ENCODE measurements at regions of chr7 and their contacts with region 1.

Region 1: GRCh38 chr7:150986099-150986512 is 4.7 kb upstream of the NOS3 start:
- DNase-seq: no peak
- H3K4me3 ChIP-seq: no peak overlapping the region
- H3K27ac ChIP-seq: no peak overlapping the region
- H3K4me1 ChIP-seq: no peaks in the 10 kb centered on the region
- H3K27me3 ChIP-seq: no peaks in the 10 kb centered on the region
- CTCF ChIP-seq: peak in 3 of 4 experiments; percentile 36 to 60 (median 55)
- POLR2A ChIP-seq: no peak

Region 2: GRCh38 chr7:150778738-150779301 is 207.3 kb before region 1 on chr7:
- intact Hi-C with region 1: loop called (anchors 2 kb)
- DNase-seq: peak; percentile 67
- H3K4me3 ChIP-seq: no peak overlapping the region
- H3K27ac ChIP-seq: no peak overlapping the region
- H3K4me1 ChIP-seq: no peaks in the 10 kb centered on the region
- H3K27me3 ChIP-seq: no peaks in the 10 kb centered on the region
- CTCF ChIP-seq: peak; percentile 52 to 85 (median 78)
- POLR2A ChIP-seq: no peak

Region 3: DNA sequence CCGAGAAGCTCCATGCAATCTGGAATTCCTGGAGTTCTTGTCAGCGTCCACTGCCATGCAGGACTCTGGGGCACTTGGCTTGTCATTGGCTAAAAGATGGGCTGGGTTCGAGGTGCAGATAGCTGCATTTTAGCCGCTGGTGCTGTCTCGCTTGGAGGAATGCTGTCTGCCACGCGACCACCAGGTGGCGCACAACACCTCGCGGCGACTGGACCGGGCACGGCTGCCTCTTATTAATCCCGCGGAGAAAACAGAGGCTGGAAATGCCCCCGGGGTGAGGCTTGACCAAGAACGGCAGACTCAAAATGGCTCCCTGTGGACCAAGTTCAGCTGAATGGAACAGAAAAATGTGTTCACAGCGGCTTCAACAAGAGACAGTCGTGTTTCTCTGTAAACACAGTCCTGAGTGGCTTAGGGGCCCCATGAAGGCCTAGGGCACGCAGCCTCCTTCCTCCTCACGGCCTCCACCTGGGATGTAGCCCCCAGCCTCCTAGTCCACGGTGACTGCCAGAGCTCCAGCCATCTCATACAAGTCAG is 87.6 kb before region 1 on chr7:
- intact Hi-C with region 1: loop called (anchors 1 kb)
- DNase-seq: peak; percentile 69
- H3K4me3 ChIP-seq: no peak overlapping the region
- H3K27ac ChIP-seq: no peak overlapping the region
- H3K4me1 ChIP-seq: no peaks in the 10 kb centered on the region
- H3K27me3 ChIP-seq: no peaks in the 10 kb centered on the region
- CTCF ChIP-seq: peak; percentile 90 to 95 (median 94)
- POLR2A ChIP-seq: no peak

Region 4: GRCh38 chr7:150962553-150963399 is 23.3 kb before region 1 on chr7:
- intact Hi-C with region 1: loop called (anchors 2 kb)
- DNase-seq: no peak
- H3K4me3 ChIP-seq: no peak overlapping the region
- H3K27ac ChIP-seq: peak overlapping the region; percentile 57 to 60
- H3K4me1 ChIP-seq: no peaks in the 10 kb centered on the region
- H3K27me3 ChIP-seq: no peaks in the 10 kb centered on the region
- CTCF ChIP-seq: peak; percentile 38 to 87 (median 69)
- POLR2A ChIP-seq: no peak

Region 5: DNA sequence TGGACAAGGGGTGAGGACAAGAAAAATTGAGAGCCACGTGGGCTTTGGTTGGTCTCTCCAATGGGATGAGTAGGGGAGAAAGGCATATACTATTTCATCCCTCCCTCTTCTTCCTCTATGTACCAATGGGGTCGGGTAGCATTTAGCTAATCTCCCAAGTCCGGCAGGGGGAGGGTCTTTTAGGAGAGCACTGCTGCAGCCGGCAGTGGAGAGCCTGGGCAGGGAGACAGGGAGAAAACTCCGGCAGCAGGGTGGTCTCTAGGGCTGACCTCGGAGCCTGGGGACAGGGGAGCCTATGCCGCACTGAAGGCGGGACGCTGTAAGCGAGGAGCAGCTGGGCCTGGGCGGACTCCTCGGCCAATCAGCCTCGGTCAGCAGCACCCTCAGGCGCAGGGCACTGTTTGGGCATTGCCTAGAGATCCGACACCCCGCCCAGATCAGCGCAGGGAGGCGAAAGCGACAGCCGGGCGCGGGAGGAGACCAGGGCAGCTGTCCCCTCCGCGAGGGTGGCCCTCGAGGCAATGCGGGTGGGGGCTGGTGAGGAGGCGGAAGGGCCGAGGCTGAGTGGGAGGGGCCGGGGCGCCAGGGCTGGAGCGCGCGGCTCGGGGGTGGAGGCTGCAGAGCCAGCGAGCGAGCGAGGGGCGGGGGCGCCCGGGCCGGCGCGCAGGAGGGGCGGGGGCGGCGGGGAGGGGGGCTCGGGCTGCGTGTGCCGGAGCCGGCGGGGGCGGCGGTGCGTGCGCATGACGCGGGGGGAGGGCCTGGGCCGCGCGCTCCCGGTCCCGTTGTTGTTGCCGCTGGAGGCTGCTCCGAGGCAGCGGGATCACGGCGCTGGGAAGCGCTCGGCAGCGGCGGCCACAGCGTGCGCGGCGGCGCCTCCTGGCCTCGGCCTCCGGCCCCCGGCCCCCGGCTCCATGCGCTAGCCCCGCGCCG is 99.8 kb after region 1 on chr7 and contains the start of gene AGAP3:
- intact Hi-C with region 1: no loop called
- DNase-seq: peak; percentile 87
- H3K4me3 ChIP-seq: peak within 1 kb of the TSS; percentile 61 to 80
- H3K27ac ChIP-seq: peak within 1 kb of the TSS; percentile 83 to 90
- H3K4me1 ChIP-seq: peaks cover 35% of the 10 kb centered on the region
- H3K27me3 ChIP-seq: no peaks in the 10 kb centered on the region
- CTCF ChIP-seq: no peak
- POLR2A ChIP-seq: peak; percentile 76
- total RNA-seq, gene AGAP3: 80.3 to 112 TPM

Measured in prostate gland (tissue), 2 donors.